ENCODE measurements at regions of chr2 and their contacts with region 1.

Region 1: GRCh38 chr2:54695378-54695777 is 28.1 kb upstream of the EML6 start:
- DNase-seq: no peak
- H3K4me3 ChIP-seq: no peak overlapping the region
- H3K27ac ChIP-seq: no peak overlapping the region
- H3K4me1 ChIP-seq: no peaks in the 10 kb centered on the region
- H3K27me3 ChIP-seq: no peaks in the 10 kb centered on the region
- CTCF ChIP-seq: no peak
- POLR2A ChIP-seq: no peak

Region 2: GRCh38 chr2:55026202-55026601 is 330.8 kb after region 1 on chr2:
- intact Hi-C with region 1: no loop called
- DNase-seq: no peak
- H3K4me3 ChIP-seq: no peak overlapping the region
- H3K27ac ChIP-seq: peak overlapping the region; percentile 52 to 58
- H3K4me1 ChIP-seq: peaks cover 0 to 26% of the 10 kb centered on the region in 2 donors
- H3K27me3 ChIP-seq: no peaks in the 10 kb centered on the region
- CTCF ChIP-seq: no peak
- POLR2A ChIP-seq: no peak

Region 3: DNA sequence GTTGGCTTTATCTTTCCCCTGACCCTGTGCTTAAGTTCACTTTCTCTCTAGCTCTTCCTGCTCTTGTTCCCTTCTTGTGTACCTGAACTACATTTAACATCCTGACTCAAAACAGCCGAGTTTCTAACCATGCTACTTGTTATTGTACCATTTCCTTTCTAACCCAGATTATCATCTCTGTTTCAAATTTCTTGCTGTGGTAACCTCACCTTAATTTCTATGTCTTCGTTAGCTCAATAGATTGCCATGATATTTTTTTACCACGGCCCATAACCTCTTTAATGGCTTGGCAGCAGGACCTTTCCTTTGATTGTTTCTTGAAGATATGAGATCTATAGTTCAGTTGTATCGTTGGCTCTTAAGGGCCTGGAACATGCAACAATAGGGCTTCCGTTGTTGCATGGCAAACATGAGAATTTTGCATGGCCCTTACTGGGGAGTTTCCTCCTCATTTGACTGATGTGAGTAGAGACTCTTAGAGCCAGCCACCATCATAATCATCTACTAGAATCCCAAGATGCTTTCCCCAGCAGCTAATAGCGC is 835.2 kb after region 1 on chr2:
- intact Hi-C with region 1: loop called (anchors 5 kb)
- DNase-seq: no peak
- H3K4me3 ChIP-seq: no peak overlapping the region
- H3K27ac ChIP-seq: no peak overlapping the region
- H3K4me1 ChIP-seq: no peaks in the 10 kb centered on the region
- H3K27me3 ChIP-seq: no peaks in the 10 kb centered on the region
- CTCF ChIP-seq: no peak
- POLR2A ChIP-seq: no peak